GM10248 (cell line): ENCODE measurements at regions of chr9 and their contacts with region 1.

Region 1: DNA sequence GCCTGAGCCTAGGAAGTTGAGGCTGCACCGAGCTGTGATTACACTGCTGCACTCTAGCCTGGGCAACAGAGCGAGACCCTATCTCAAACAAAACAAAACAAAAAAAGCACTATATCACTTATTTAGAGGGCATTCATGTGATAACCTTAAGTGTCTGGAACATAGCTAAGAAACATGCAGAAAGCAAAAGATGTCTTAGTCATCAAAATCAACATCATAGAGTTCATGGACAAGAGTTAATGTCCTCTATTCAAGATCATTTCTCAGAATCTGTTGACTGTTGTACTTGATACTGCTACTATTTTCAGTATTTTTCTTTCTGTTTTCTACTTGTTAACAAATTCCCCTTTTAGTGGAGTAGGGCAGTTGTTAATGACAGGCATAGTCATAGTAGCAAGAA is 25.4 kb downstream of the FSD1L start:
- DNase-seq: no peak
- CTCF ChIP-seq: no peak

Region 2: DNA sequence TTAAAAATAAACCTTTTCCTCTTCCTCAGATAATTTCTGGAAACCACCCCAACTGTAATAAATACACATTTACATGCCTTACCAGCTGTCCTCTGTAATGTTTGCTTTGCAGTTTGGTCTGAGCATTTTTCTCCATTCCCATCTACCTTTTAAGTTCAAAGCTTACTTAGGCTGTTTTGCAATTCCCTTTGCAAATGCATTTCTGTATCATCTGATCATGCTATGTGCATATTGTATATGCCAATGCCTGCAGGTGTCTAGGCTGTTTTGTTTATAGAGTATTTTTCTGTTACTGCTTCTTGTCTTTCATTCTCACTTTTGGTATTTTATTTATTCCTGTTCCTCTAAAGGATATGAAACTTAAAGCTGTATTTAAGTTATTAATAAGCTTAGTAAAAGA is 142.5 kb before region 1 on chr9:
- CTCF ChIA-PET with region 1: no interaction called
- POLR2A ChIA-PET with region 1: no interaction called
- DNase-seq: no peak
- CTCF ChIP-seq: no peak

Region 3: GRCh38 chr9:105483618-105484017 is 10.4 kb after region 1 on chr9:
- CTCF ChIA-PET with region 1: interaction called, 12 read pairs
- POLR2A ChIA-PET with region 1: no interaction called
- DNase-seq: peak; percentile 15
- CTCF ChIP-seq: no peak